ENCODE measurements at regions of chr18 and their contacts with region 1.

Region 1: GRCh38 chr18:36296650-36297416 is 680 bp upstream of the FHOD3 start:
- DNase-seq: peak; percentile 57
- H3K4me3 ChIP-seq: peak overlapping the region; percentile 47 to 78 (median 78)
- H3K27ac ChIP-seq: peak overlapping the region; percentile 26
- H3K4me1 ChIP-seq: peaks cover 31% of the 10 kb centered on the region
- H3K27me3 ChIP-seq: no peaks in the 10 kb centered on the region
- CTCF ChIP-seq: peak in 1 of 2 donors; percentile 41

Region 2: DNA sequence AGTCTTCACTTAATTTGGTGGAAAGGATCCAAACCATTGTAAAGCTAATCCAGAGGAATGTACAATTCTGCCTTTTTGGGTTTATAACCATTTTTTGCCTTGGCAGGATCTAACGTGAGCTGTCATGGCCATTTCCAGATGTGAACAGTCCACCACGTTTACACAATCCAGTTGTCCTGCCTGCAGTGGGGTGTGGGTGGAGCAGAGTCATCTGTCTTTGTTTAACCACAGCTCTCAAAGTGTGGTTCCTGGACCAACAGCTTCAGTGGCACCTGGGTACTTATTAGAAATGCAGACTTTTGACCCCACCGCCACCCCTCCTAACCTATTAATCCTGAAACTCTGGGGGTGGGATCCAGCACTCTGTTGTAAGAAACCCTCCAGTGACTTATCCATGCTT is 36.6 kb after region 1 on chr18:
- CTCF ChIA-PET with region 1: no interaction called
- dilution Hi-C with region 1: loop called (anchors 5 kb)
- in situ Hi-C with region 1: no loop called
- intact Hi-C with region 1: no loop called
- DNase-seq: peak; percentile 32
- H3K4me3 ChIP-seq: no peak overlapping the region
- H3K27ac ChIP-seq: no peak overlapping the region
- H3K4me1 ChIP-seq: no peaks in the 10 kb centered on the region
- H3K27me3 ChIP-seq: no peaks in the 10 kb centered on the region
- CTCF ChIP-seq: no peak

Region 3: GRCh38 chr18:36372903-36373311 is 76.1 kb after region 1 on chr18:
- CTCF ChIA-PET with region 1: no interaction called
- dilution Hi-C with region 1: loop called (anchors 5 kb)
- in situ Hi-C with region 1: no loop called
- intact Hi-C with region 1: loop called (anchors 2 kb)
- DNase-seq: peak; percentile 85
- H3K4me3 ChIP-seq: no peak overlapping the region
- H3K27ac ChIP-seq: peak overlapping the region; percentile 18
- H3K4me1 ChIP-seq: peaks cover 28% of the 10 kb centered on the region
- H3K27me3 ChIP-seq: no peaks in the 10 kb centered on the region
- CTCF ChIP-seq: peak; percentile 49 to 55

Region 4: DNA sequence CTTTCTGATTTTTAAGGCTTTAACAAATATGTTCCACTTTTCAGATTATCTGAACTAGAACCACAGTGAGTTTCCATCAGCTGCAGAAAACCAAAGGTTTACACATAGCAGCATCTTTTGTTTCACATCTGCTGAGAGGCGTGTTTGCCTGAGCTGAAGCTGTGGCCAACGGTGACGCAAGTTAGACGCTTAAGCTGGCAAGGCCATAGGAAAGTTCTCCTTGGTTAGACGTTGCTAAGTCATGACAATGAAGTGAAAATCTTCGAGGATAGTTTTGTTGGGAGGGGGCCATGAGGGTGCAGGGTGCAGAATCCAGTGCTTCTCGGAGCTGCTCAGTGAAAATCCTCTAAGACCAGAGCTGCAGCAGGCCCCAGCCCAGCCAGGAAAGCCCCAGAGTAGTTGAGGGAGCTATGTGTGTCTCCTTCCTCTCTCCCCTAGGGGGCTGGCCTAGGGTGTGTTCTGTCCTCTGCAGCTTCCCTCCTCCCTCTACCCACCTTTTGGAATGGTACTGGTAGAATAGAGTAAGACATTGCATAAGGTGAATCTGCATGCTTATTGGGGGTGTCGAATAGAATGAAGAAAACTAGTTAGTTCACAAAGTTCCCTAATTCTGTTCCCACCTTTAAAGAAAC is 106.0 kb after region 1 on chr18:
- CTCF ChIA-PET with region 1: no interaction called
- dilution Hi-C with region 1: loop called (anchors 5 kb)
- in situ Hi-C with region 1: no loop called
- intact Hi-C with region 1: loop called (anchors 5 kb)
- DNase-seq: no peak
- H3K4me3 ChIP-seq: no peak overlapping the region
- H3K27ac ChIP-seq: no peak overlapping the region
- H3K4me1 ChIP-seq: peaks cover 30% of the 10 kb centered on the region
- H3K27me3 ChIP-seq: no peaks in the 10 kb centered on the region
- CTCF ChIP-seq: no peak

Region 5: DNA sequence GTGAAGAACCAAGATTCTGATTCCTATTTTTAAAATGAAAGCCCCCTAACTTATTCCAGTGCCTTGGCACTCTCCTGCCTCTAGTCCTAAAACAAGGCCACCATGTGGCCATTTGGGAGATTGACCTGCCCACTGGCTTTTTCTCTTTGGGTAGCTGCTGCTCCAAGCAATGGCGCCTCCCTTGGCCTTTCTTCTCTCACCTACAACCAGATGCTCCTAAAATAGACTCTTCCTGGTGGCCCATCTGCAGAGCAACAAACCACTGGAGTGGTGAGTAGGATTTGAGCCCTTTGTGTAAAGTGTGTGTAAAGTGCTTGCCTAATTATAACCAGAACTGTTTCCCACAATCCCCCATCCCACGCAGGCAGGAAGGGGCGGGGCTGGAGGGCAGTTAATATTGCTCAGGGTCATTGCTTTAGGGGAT is 114.9 kb after region 1 on chr18:
- CTCF ChIA-PET with region 1: no interaction called
- dilution Hi-C with region 1: no loop called
- in situ Hi-C with region 1: no loop called
- intact Hi-C with region 1: loop called (anchors 1 kb)
- DNase-seq: no peak
- H3K4me3 ChIP-seq: no peak overlapping the region
- H3K27ac ChIP-seq: no peak overlapping the region
- H3K4me1 ChIP-seq: peaks cover 4% of the 10 kb centered on the region
- H3K27me3 ChIP-seq: no peaks in the 10 kb centered on the region
- CTCF ChIP-seq: peak; percentile 48 to 63

Region 6: DNA sequence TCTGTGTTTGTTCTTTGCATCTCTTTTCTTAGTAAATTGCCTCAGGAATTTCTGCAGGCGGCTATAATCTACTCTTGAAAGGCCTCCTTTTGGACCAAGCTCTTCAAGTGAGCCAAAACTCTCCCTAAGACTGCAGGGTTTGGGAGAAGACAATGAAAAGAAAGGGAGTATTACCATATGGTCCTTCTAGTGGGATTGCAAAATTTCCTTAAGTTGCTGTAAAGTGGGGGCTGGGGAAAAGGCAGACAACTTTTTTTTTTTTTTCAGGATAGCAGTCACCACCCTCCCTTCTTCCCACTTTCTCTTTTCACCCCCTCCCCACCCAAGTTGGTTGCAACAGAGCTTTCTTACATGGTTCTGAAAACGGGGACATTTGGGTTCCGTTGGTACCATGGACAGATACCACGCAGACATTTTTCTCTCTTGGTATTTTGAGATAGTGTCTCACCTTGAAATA is 184.4 kb after region 1 on chr18:
- CTCF ChIA-PET with region 1: no interaction called
- dilution Hi-C with region 1: no loop called
- in situ Hi-C with region 1: no loop called
- intact Hi-C with region 1: no loop called
- DNase-seq: no peak
- H3K4me3 ChIP-seq: no peak overlapping the region
- H3K27ac ChIP-seq: no peak overlapping the region
- H3K4me1 ChIP-seq: peaks cover 11% of the 10 kb centered on the region
- H3K27me3 ChIP-seq: no peaks in the 10 kb centered on the region
- CTCF ChIP-seq: no peak

Region 7: DNA sequence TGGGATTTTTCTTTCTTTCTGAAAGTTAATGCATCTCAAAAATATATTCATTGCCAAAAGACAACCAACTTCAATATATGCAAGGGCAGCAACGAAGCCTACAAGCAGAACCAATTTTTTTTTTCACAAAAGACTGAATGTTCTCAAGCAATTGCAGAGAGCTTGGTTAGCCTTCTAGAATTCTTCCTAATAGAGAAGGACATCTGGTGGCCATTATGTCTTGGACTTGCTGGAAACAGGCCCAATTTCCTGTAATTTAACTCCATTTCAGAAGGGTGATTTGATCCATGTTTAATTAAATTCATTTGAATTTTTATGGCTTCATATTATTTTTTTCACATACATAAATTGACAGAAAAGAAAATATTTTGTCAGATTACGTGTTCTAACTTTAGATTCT is 324.0 kb after region 1 on chr18:
- CTCF ChIA-PET with region 1: interaction called, 3 read pairs
- dilution Hi-C with region 1: no loop called
- in situ Hi-C with region 1: no loop called
- intact Hi-C with region 1: loop called (anchors 1 kb)
- DNase-seq: no peak
- H3K4me3 ChIP-seq: no peak overlapping the region
- H3K27ac ChIP-seq: no peak overlapping the region
- H3K4me1 ChIP-seq: peaks cover 14% of the 10 kb centered on the region
- H3K27me3 ChIP-seq: no peaks in the 10 kb centered on the region
- CTCF ChIP-seq: peak; percentile 13 to 32

Region 8: GRCh38 chr18:36661999-36662398 is 365.2 kb after region 1 on chr18:
- CTCF ChIA-PET with region 1: no interaction called
- dilution Hi-C with region 1: no loop called
- in situ Hi-C with region 1: no loop called
- intact Hi-C with region 1: loop called (anchors 5 kb)
- DNase-seq: no peak
- H3K4me3 ChIP-seq: no peak overlapping the region
- H3K27ac ChIP-seq: no peak overlapping the region
- H3K4me1 ChIP-seq: peaks cover 10% of the 10 kb centered on the region
- H3K27me3 ChIP-seq: no peaks in the 10 kb centered on the region
- CTCF ChIP-seq: peak in 1 of 2 donors; percentile 39

Measured in mammary epithelial cell (primary cell).